Tibial artery (tissue), 4 donors: ENCODE measurements at regions of chr17 and their contacts with region 1.

Region 1: DNA sequence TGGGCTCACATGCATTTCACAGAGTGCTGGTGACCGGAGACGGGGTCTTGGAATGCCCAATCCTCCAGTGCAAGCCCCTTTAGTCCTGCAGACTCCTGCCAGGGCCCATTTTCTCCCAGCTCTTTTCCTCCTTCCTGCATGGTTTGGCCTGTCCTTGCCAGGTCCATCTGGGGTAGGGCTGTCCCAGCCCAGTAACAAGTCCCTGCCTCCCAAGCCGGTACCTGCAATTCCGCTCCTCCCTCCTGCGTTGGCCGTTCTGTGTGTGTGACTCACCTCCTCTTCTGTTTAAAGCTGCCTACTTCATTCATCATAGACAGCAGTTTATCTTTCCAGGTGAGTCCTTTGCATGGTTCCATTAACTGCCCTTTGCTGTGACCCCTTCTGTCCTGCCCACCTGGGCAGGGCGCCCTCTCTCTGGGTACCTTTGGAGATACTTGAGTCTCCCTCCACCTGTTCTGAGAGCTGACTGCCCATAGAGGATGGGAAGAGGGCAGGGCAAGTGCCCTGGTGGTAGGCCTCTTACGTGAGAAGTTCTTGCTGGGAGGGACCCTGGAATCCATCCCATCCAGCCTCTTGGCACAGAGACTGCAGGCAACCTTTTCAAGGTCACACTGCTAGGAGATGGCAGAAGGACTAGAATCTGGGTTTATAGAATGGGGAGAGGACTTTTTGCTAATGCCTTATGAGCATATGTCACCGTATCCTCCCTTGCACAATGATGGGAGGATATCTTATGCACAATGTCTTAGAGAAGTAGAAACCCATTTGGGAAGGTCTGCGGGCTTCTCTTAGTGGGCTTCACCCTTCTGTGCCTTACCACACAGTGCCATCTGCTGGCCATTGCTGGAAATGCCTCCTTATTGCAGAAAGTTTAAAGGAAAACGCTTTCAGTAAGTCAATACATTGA is 29.7 kb upstream of the LGALS9 start:
- DNase-seq: peak; percentile 80 to 89
- H3K4me3 ChIP-seq: no peak overlapping the region
- H3K27ac ChIP-seq: no peak overlapping the region
- H3K4me1 ChIP-seq: peaks cover 0 to 3% (median 3%) of the 10 kb centered on the region in 4 donors
- H3K27me3 ChIP-seq: no peaks in the 10 kb centered on the region
- CTCF ChIP-seq: peak; percentile 90 to 94

Region 2: GRCh38 chr17:27236717-27237315 is 364.5 kb before region 1 on chr17:
- intact Hi-C with region 1: loop called (anchors 2 kb)
- DNase-seq: peak; percentile 85 to 86
- H3K4me3 ChIP-seq: no peak overlapping the region
- H3K27ac ChIP-seq: peak overlapping the region in 1 of 2 donors; percentile 3
- H3K4me1 ChIP-seq: peaks cover 0 to 30% (median 15%) of the 10 kb centered on the region in 4 donors
- H3K27me3 ChIP-seq: no peaks in the 10 kb centered on the region
- CTCF ChIP-seq: peak; percentile 89 to 97

Region 3: GRCh38 chr17:27353461-27354050 is 247.8 kb before region 1 on chr17:
- intact Hi-C with region 1: loop called (anchors 1 kb)
- DNase-seq: peak; percentile 90 to 97
- H3K4me3 ChIP-seq: peak overlapping the region; percentile 67 to 87
- H3K27ac ChIP-seq: peak overlapping the region; percentile 96 to 97
- H3K4me1 ChIP-seq: peaks cover 0 to 23% (median 16%) of the 10 kb centered on the region in 4 donors
- H3K27me3 ChIP-seq: no peaks in the 10 kb centered on the region
- CTCF ChIP-seq: peak; percentile 95 to 99

Region 4: DNA sequence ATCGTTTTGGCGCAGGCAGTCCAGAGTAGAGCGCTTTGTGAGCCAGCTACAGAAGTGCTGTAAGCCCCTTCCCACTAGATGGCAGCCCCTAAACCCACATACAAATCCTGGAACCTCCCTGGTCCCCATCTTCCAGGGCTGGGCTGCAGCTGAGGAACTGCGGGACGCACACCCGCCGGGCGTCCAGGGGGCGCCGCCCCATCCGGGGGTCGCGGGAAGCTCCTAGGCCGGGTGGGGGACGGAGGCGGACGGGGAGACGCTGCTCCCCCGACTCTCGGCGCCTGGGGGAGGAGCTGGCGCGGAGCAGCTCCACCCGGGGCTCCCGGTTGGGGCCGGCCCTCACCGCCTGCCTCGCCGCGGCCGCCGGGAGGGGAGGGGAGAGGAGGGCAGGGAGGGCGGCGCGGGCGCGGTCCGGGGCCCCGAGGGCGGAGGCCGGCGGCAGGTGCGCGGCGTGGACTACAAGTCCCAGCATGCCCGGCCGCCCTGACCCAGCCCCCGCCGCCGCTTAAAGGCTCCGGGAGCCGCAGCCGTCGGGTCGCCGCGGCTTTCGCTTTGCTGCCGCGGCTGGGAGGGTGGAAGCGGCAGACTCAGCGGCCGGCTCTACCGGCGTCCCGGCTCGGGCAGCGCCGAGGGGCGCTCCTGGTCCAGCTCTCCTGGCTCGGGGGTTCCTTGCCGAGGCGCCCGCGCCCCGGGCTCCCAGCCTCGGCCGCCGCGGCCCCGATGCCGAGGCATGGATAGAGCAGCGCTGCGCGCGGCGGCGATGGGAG is 145.2 kb before region 1 on chr17 and contains the start of gene KSR1:
- intact Hi-C with region 1: loop called (anchors 10 kb)
- DNase-seq: peak; percentile 79 to 88
- H3K4me3 ChIP-seq: peak within 1 kb of the TSS; percentile 83 to 95
- H3K27ac ChIP-seq: peak within 1 kb of the TSS; percentile 87 to 95
- H3K4me1 ChIP-seq: peaks cover 0 to 25% (median 18%) of the 10 kb centered on the region in 4 donors
- H3K27me3 ChIP-seq: no peaks in the 10 kb centered on the region
- CTCF ChIP-seq: peak; percentile 5 to 8

Region 5: DNA sequence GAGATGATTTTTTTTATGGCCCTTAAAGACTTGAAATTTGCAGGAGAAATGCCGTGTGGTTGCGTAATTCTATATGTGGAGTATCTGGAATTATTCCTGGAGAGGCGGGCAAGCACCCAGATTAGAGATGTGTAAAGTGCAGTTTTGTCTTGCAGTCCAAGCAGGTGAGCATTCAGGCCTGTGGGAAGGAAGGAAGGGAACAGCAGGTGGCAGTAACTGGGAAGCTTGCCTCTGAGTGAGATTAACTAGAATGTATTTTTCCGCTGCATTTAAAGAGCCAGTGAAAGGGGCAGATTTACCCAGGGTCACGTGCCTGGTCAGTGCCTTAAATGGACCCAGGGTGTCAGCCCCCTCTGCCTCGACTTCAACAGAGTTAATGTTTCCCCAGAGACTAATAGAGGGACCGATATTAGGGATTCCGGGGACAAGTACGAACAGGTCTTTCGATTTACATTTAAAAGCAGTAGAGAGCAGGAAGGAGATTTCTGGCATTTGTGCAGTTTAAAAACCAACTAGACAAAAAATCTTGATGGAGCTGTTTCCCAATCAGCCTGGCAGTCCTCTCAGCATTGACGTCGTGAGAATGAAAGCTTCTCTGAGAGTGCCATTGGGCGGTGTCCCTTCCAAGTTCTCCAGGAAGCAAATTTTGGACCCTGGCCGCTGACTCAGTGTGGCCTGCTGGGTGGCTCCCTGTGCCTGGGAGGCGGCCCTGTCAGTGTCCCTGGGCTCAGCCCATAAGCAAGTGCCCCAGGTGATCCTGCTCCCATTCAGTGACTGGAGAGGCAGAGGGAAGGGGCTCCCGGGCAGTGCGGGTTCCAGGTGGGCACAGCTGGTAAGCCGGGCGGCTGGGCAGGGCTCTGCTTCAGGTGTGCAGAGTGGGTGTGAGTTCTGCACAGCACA is 106.9 kb before region 1 on chr17:
- intact Hi-C with region 1: loop called (anchors 2 kb)
- DNase-seq: peak; percentile 92 to 96
- H3K4me3 ChIP-seq: peak overlapping the region; percentile 19 to 29
- H3K27ac ChIP-seq: peak overlapping the region; percentile 82 to 89
- H3K4me1 ChIP-seq: peaks cover 0 to 37% (median 20%) of the 10 kb centered on the region in 4 donors
- H3K27me3 ChIP-seq: no peaks in the 10 kb centered on the region
- CTCF ChIP-seq: peak; percentile 54 to 60

Region 6: DNA sequence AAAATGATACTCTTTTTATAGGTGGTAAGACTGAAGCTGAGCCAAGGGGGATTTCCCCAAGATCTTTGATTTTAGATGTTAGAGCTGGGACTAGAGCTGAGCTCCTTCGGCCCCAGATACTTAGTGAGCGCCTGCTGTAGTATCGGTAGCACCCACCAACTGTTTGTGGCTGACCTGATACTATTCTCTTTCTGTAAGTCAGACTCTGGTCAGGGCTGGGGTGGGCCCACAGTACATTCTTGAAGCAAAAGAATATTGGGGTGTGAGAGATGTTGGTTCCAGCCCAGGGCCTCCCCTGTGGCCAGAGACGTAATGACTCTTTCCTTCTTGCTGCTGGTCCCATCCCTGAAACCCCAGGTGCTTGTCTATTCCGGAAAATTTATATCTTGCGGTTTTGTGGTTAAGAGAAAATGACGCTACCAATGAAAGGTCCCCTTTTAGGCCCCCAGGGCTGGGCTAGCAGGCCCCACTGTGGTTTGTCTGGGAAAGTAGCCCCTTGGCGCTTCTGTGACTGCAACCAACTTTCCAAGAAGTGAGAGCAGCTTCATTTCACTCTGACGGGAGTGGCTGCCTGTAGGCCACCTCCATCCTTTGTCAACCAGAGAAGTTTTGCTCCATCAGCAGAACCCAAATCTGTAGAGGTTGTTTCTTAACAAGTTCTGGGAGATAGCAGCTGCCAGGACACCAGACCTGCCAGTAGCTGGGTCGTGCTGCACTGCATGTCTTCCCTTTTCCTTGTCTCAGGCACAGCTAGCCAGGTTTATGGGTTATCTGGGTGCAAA is 56.8 kb before region 1 on chr17:
- intact Hi-C with region 1: no loop called
- DNase-seq: no peak
- H3K4me3 ChIP-seq: no peak overlapping the region
- H3K27ac ChIP-seq: no peak overlapping the region
- H3K4me1 ChIP-seq: peaks cover 4 to 28% (median 22%) of the 10 kb centered on the region in 4 donors
- H3K27me3 ChIP-seq: no peaks in the 10 kb centered on the region
- CTCF ChIP-seq: no peak

Region 7: DNA sequence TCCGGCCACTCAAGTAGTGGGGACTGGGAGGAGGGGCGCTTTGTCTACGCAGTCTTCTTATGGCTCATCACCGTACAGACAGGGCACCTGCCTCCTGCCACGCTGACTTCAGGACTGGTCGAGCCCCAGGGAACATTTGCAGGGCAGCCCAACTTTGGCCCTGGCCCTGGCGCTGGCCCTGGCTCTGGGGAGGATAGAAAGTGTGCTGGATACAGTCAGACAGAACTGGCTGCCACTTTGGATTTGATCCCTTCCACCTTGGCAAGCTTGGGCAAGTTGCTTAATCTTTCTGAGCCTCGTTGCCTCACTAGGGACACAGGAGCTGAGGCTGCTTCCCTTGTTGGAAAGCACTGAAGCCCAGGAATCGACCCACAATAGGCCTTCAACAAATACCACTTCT is 43.3 kb after region 1 on chr17:
- intact Hi-C with region 1: no loop called
- DNase-seq: peak in 1 of 2 donors; percentile 65
- H3K4me3 ChIP-seq: no peak overlapping the region
- H3K27ac ChIP-seq: no peak overlapping the region
- H3K4me1 ChIP-seq: no peaks in the 10 kb centered on the region
- H3K27me3 ChIP-seq: no peaks in the 10 kb centered on the region
- CTCF ChIP-seq: no peak

Region 8: GRCh38 chr17:27654654-27655524 is 53.6 kb after region 1 on chr17:
- intact Hi-C with region 1: loop called (anchors 5 kb)
- DNase-seq: peak in 1 of 2 donors; percentile 50
- H3K4me3 ChIP-seq: no peak overlapping the region
- H3K27ac ChIP-seq: no peak overlapping the region
- H3K4me1 ChIP-seq: no peaks in the 10 kb centered on the region
- H3K27me3 ChIP-seq: peaks cover 0 to 8% of the 10 kb centered on the region in 2 donors
- CTCF ChIP-seq: peak; percentile 77 to 81

Region 9: DNA sequence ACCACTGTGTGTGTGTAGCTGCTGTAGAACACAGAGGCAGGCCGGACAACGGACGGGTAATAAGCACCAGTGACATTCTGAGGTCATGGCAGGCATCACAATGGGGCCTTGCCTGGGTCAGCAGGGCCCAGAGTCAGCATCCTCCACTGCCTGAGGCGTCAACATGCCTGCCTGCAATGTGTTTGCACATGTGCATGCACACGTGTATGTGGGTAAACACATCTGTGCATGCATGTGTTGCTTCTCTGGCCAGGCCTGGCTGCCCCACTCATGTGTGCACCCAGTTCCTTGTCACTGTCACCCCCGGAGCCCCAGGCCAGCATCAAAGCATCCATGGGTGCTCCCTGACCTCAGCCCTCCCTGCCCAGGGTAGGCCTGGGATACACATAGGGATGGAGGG is 73.0 kb after region 1 on chr17:
- intact Hi-C with region 1: no loop called
- DNase-seq: peak in 1 of 2 donors; percentile 54
- H3K4me3 ChIP-seq: no peak overlapping the region
- H3K27ac ChIP-seq: no peak overlapping the region
- H3K4me1 ChIP-seq: no peaks in the 10 kb centered on the region
- H3K27me3 ChIP-seq: peaks cover 0 to 6% of the 10 kb centered on the region in 2 donors
- CTCF ChIP-seq: no peak